ENCODE measurements at regions of chr7 and their contacts with region 1.

Region 1: GRCh38 chr7:6205971-6206660 is 66.3 kb downstream of the CYTH3 start:
- DNase-seq: no peak
- ATAC-seq: no peak
- H3K4me3 ChIP-seq: no peak overlapping the region
- H3K27ac ChIP-seq: no peak overlapping the region
- H3K4me1 ChIP-seq: peaks cover 8 to 14% of the 10 kb centered on the region in 2 donors
- H3K27me3 ChIP-seq: no peaks in the 10 kb centered on the region

Region 2: GRCh38 chr7:5743803-5744202 is 462.3 kb before region 1 on chr7:
- intact Hi-C with region 1: no loop called
- DNase-seq: no peak
- ATAC-seq: no peak
- H3K4me3 ChIP-seq: no peak overlapping the region
- H3K27ac ChIP-seq: no peak overlapping the region
- H3K4me1 ChIP-seq: peaks cover 2 to 8% of the 10 kb centered on the region in 2 donors
- H3K27me3 ChIP-seq: no peaks in the 10 kb centered on the region

Region 3: DNA sequence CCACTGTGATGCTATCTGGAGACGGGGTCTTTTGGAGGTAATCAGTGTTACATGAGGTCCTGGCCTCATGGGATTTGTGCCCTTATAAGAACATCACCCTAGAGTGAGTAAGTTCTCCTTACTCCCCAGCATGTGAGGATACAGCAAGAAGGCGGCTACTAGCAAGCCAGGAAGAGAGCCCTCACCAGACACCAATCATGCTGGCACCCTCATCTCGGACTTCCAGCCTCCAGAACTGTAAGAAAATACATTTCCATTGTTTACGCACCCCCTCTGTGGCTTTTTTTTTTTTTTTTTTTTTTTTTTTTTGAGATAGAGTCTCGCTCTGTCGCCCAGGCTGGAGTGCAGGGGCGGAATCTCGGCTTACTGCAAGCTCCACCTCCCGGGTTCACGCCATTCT is 22.3 kb before region 1 on chr7:
- intact Hi-C with region 1: loop called in 1 of 2 experiments (anchors 2 kb)
- DNase-seq: no peak
- ATAC-seq: no peak
- H3K4me3 ChIP-seq: no peak overlapping the region
- H3K27ac ChIP-seq: no peak overlapping the region
- H3K4me1 ChIP-seq: peaks cover 4% of the 10 kb centered on the region in 2 donors
- H3K27me3 ChIP-seq: no peaks in the 10 kb centered on the region